Endothelial cell of umbilical vein (primary cell): ENCODE measurements at regions of chr18 and their contacts with region 1.

Region 1: DNA sequence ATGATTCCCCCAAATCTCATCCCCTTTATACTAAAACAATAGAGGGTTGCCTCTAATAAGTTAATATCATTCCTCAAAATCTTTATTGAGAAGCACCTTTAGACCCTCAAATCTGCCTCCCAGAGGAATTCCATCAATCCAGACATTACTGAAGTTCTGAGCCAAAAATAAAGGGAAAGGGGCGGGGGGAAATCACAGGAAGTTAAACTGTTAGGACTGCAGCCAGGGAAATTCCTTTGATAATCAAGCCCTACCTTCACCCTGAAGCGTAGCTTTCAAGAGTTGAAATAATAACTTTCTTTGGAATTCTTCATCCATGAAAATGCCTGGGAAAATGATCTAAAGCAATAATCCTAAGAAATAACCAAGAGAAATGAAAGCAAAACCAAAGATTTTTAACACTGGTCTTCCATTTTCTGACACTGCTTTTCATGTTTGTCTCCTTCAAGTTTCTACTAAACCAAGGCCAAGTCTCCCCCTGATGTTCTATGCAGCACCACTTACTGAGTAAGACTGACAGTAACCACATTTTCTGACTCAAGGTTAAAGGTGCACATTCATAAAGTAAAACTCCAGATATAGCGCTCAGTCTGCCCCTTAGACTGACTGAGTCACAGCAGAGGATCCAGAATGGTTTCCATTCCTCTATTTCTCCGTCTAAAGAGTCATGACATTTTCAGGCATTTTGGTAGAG is 78.2 kb downstream of the TCF4 start:
- DNase-seq: peak; percentile 91
- H3K4me3 ChIP-seq: peak overlapping the region; percentile 13 to 55 (median 22)
- H3K27ac ChIP-seq: peak overlapping the region; percentile 96
- H3K4me1 ChIP-seq: peaks cover 60% of the 10 kb centered on the region
- H3K27me3 ChIP-seq: no peaks in the 10 kb centered on the region
- CTCF ChIP-seq: no peak
- POLR2A ChIP-seq: no peak

Region 2: GRCh38 chr18:55328301-55328700 is 181.5 kb before region 1 on chr18:
- CTCF ChIA-PET with region 1: no interaction called
- POLR2A ChIA-PET with region 1: no interaction called
- dilution Hi-C with region 1: no loop called
- intact Hi-C with region 1: loop called (anchors 2 kb)
- DNase-seq: peak; percentile 96
- H3K4me3 ChIP-seq: peak overlapping the region in 1 of 3 experiments; percentile 19
- H3K27ac ChIP-seq: peak overlapping the region; percentile 92
- H3K4me1 ChIP-seq: peaks cover 69% of the 10 kb centered on the region
- H3K27me3 ChIP-seq: no peaks in the 10 kb centered on the region
- CTCF ChIP-seq: no peak
- POLR2A ChIP-seq: peak; percentile 36

Region 3: GRCh38 chr18:55415258-55415871 is 94.4 kb before region 1 on chr18:
- CTCF ChIA-PET with region 1: interaction called, 20 read pairs
- POLR2A ChIA-PET with region 1: no interaction called
- dilution Hi-C with region 1: no loop called
- intact Hi-C with region 1: loop called (anchors 1 kb)
- DNase-seq: peak; percentile 90
- H3K4me3 ChIP-seq: no peak overlapping the region
- H3K27ac ChIP-seq: peak overlapping the region; percentile 13
- H3K4me1 ChIP-seq: peaks cover 45% of the 10 kb centered on the region
- H3K27me3 ChIP-seq: no peaks in the 10 kb centered on the region
- CTCF ChIP-seq: peak; percentile 79 to 91
- POLR2A ChIP-seq: no peak

Region 4: GRCh38 chr18:55610506-55610905 is 100.7 kb after region 1 on chr18:
- CTCF ChIA-PET with region 1: no interaction called
- POLR2A ChIA-PET with region 1: no interaction called
- dilution Hi-C with region 1: no loop called
- intact Hi-C with region 1: no loop called
- DNase-seq: no peak
- H3K4me3 ChIP-seq: no peak overlapping the region
- H3K27ac ChIP-seq: no peak overlapping the region
- H3K4me1 ChIP-seq: no peaks in the 10 kb centered on the region
- H3K27me3 ChIP-seq: no peaks in the 10 kb centered on the region
- CTCF ChIP-seq: no peak
- POLR2A ChIP-seq: no peak

Region 5: DNA sequence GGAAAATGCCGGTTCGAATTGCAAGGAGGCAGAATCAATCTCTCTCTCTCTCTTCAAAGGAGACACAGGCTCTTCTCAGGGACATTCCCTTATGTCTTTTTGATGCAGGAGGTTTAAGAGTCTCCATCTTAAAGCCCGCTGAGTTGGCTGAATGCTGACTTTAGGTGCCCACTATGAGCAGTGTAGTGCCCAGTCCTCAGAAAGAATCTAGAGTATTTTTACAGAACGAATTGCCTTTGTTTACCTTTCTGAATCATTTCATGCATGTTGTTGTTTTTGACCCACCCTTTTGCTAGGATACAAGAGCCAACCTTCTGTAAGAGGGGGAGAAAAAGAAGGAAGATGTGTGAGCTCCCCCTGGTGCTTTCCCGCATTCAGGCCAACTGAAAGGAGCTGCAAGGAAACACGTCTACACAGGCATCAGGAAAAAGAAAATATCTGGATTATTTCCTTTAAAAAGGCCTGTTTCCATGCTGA is 271.7 kb after region 1 on chr18:
- CTCF ChIA-PET with region 1: interaction called, 7 read pairs
- POLR2A ChIA-PET with region 1: no interaction called
- dilution Hi-C with region 1: no loop called
- intact Hi-C with region 1: loop called (anchors 1 kb)
- DNase-seq: peak; percentile 90
- H3K4me3 ChIP-seq: no peak overlapping the region
- H3K27ac ChIP-seq: peak overlapping the region; percentile 47
- H3K4me1 ChIP-seq: peaks cover 27% of the 10 kb centered on the region
- H3K27me3 ChIP-seq: no peaks in the 10 kb centered on the region
- CTCF ChIP-seq: peak; percentile 75 to 85
- POLR2A ChIP-seq: no peak

Region 6: GRCh38 chr18:56200381-56200911 is 690.7 kb after region 1 on chr18:
- CTCF ChIA-PET with region 1: no interaction called
- POLR2A ChIA-PET with region 1: no interaction called
- dilution Hi-C with region 1: no loop called
- intact Hi-C with region 1: loop called (anchors 1 kb)
- DNase-seq: peak; percentile 93
- H3K4me3 ChIP-seq: no peak overlapping the region
- H3K27ac ChIP-seq: peak overlapping the region; percentile 98
- H3K4me1 ChIP-seq: peaks cover 66% of the 10 kb centered on the region
- H3K27me3 ChIP-seq: no peaks in the 10 kb centered on the region
- CTCF ChIP-seq: no peak
- POLR2A ChIP-seq: no peak